PC-3 (cell line): ENCODE measurements at regions of chr5 and their contacts with region 1.

Region 1: GRCh38 chr5:21171066-21171465 is 1183.1 kb upstream of the CDH18 start:
- DNase-seq: peak; percentile 70
- ATAC-seq: peak; percentile 77
- H3K4me3 ChIP-seq: no peak overlapping the region
- H3K27ac ChIP-seq: peak overlapping the region; percentile 30
- H3K4me1 ChIP-seq: peaks cover 28% of the 10 kb centered on the region
- H3K27me3 ChIP-seq: no peaks in the 10 kb centered on the region
- CTCF ChIP-seq: no peak

Region 2: GRCh38 chr5:21199087-21199486 is 28.0 kb after region 1 on chr5:
- CTCF ChIA-PET with region 1: no interaction called
- POLR2A ChIA-PET with region 1: no interaction called
- intact Hi-C with region 1: loop called (anchors 2 kb)
- DNase-seq: no peak
- ATAC-seq: no peak
- H3K4me3 ChIP-seq: no peak overlapping the region
- H3K27ac ChIP-seq: no peak overlapping the region
- H3K4me1 ChIP-seq: peaks cover 16% of the 10 kb centered on the region
- H3K27me3 ChIP-seq: no peaks in the 10 kb centered on the region
- CTCF ChIP-seq: no peak